H1 (cell line): ENCODE measurements at regions of chr12 and their contacts with region 1.

Region 1: GRCh38 chr12:7645394-7646177 is 20.1 kb downstream of the APOBEC1 start:
- DNase-seq: no peak
- H3K4me3 ChIP-seq: peak overlapping the region in 1 of 4 experiments; percentile 17; a peak in 1 of 8 replicates
- H3K27ac ChIP-seq: no peak overlapping the region
- H3K4me1 ChIP-seq: peaks cover 6 to 17% (median 13%) of the 10 kb centered on the region in 4 experiments; a peak in 6 of 7 replicates
- H3K27me3 ChIP-seq: no peaks in the 10 kb centered on the region
- CTCF ChIP-seq: peak in 2 of 3 experiments; percentile 35 to 65; a peak in 2 of 4 replicates
- EP300 ChIP-seq: no peak
- POLR2A ChIP-seq: no peak
- RAD21 ChIP-seq: peak in 1 of 2 experiments; percentile 45; a peak in 2 of 4 replicates

Region 2: GRCh38 chr12:7496461-7497175 is 149.0 kb before region 1 on chr12:
- CTCF ChIA-PET with region 1: no interaction called
- POLR2A ChIA-PET with region 1: no interaction called
- DNase-seq: no peak
- H3K4me3 ChIP-seq: no peak overlapping the region
- H3K27ac ChIP-seq: no peak overlapping the region
- H3K4me1 ChIP-seq: peaks cover 0 to 5% (median 0%) of the 10 kb centered on the region in 4 experiments; a peak in 1 of 7 replicates
- H3K27me3 ChIP-seq: no peaks in the 10 kb centered on the region
- CTCF ChIP-seq: no peak
- EP300 ChIP-seq: no peak
- POLR2A ChIP-seq: no peak
- RAD21 ChIP-seq: no peak

Region 3: GRCh38 chr12:7667125-7667524 is 21.5 kb after region 1 on chr12:
- CTCF ChIA-PET with region 1: interaction called, 27 read pairs
- POLR2A ChIA-PET with region 1: interaction called, 3 read pairs
- DNase-seq: no peak
- H3K4me3 ChIP-seq: no peak overlapping the region
- H3K27ac ChIP-seq: no peak overlapping the region
- H3K4me1 ChIP-seq: no peaks in the 10 kb centered on the region
- H3K27me3 ChIP-seq: no peaks in the 10 kb centered on the region; a peak in 1 of 7 replicates
- CTCF ChIP-seq: peak in 2 of 3 experiments; percentile 44 to 60; a peak in 2 of 4 replicates
- EP300 ChIP-seq: no peak
- POLR2A ChIP-seq: no peak
- RAD21 ChIP-seq: peak; percentile 53 to 68

Region 4: GRCh38 chr12:7787574-7788300 is 142.2 kb after region 1 on chr12:
- CTCF ChIA-PET with region 1: interaction called, 12 read pairs
- POLR2A ChIA-PET with region 1: no interaction called
- DNase-seq: peak; percentile 61 to 68
- H3K4me3 ChIP-seq: peak overlapping the region; percentile 13 to 72 (median 22); a peak in 5 of 8 replicates
- H3K27ac ChIP-seq: peak overlapping the region; percentile 43
- H3K4me1 ChIP-seq: peaks cover 8 to 21% (median 14%) of the 10 kb centered on the region in 4 experiments
- H3K27me3 ChIP-seq: no peaks in the 10 kb centered on the region
- CTCF ChIP-seq: no peak
- EP300 ChIP-seq: no peak
- POLR2A ChIP-seq: no peak
- RAD21 ChIP-seq: peak in 1 of 2 experiments; percentile 16; a peak in 2 of 4 replicates

Region 5: GRCh38 chr12:7806863-7807487 is 161.4 kb after region 1 on chr12:
- CTCF ChIA-PET with region 1: interaction called, 53 read pairs
- POLR2A ChIA-PET with region 1: interaction called, 4 read pairs
- DNase-seq: peak; percentile 75 to 95
- H3K4me3 ChIP-seq: no peak overlapping the region
- H3K27ac ChIP-seq: no peak overlapping the region
- H3K4me1 ChIP-seq: no peaks in the 10 kb centered on the region
- H3K27me3 ChIP-seq: no peaks in the 10 kb centered on the region
- CTCF ChIP-seq: peak; percentile 72 to 99 (median 95)
- EP300 ChIP-seq: no peak
- POLR2A ChIP-seq: no peak
- RAD21 ChIP-seq: peak; percentile 99 to 100

Region 6: DNA sequence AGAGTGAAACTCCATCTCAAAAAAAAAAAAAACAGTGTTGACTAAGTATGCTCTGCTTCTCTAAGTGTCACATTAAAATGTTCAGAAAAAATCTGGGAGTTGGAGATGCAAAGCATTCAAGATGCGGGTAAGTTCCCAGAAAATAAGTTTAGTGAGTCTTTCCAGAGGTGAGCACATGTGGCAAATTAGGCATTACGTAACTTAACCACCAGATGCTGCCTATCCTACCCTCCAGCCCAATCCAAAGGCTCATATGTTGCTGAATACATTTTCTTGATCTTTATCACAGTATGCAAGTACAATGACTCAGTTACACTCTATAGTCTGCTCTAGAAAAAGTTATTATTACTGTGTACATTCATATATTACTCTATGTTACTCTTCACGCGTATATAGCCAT is 223.5 kb after region 1 on chr12:
- CTCF ChIA-PET with region 1: no interaction called
- POLR2A ChIA-PET with region 1: no interaction called
- DNase-seq: no peak
- H3K4me3 ChIP-seq: no peak overlapping the region
- H3K27ac ChIP-seq: no peak overlapping the region
- H3K4me1 ChIP-seq: peaks cover 0 to 2% (median 0%) of the 10 kb centered on the region in 4 experiments; a peak in 2 of 7 replicates
- H3K27me3 ChIP-seq: no peaks in the 10 kb centered on the region
- CTCF ChIP-seq: no peak
- EP300 ChIP-seq: no peak
- POLR2A ChIP-seq: no peak
- RAD21 ChIP-seq: no peak